ENCODE measurements at regions of chr6 and their contacts with region 1.

Region 1: DNA sequence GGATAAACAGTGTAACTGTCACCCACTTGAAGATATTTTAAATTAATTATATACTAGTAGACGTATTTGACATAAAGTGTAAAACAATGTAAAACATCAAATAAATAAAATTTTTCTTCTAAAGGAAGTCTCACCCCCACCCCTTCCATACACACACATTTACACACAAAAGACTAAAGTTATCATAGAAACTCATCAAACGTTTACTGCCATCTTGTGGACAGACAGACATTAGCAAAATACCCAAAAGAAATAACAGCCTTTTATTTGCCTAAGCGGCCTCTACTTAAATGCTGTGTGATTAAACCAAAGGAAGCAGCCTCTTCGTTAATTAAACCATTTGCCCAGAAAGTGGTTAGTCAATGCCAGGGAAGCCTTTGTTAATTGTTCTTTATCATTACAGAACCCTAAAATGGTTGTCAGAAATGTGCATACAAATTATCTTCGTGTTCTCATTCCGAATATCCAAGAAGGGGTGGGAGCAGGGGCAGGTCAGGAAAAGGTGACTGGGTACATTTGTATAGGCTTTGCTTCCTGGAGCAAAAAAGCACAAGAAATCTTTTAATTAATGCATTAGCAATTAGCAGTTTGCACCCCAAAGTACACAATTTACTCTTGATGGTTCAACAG is 176.2 kb upstream of the SASH1 start:
- DNase-seq: no peak
- ATAC-seq: no peak

Region 2: DNA sequence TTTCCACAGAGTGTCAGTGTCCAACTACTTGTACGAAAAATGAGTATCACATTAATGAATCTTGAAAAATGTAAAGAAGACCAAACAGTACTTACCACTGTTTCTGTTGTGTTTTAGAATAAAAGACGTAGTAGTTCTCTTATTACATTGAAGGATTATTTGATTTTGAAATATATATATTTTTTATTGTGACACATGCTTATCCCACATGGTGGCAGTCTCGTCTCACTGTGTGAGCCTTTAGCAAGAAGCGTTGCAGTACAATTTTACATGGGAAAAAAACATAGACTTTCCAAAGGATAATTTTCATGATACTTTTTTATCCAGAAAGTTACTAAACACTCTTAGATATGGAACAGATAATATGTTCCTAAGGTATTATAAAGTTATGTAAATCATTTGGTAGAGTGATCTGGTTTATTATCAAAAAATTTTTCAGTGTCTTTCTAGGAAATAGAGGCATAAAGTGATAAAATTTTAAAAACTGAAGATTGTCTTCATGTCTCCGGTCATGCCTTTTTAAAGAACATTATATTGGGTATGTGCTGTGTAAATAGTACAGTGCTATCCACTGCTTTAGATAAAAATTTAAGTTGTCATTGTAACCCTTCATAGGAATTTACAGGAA is 775.4 kb before region 1 on chr6:
- intact Hi-C with region 1: loop called (anchors 5 kb)
- DNase-seq: no peak
- ATAC-seq: no peak

Region 3: DNA sequence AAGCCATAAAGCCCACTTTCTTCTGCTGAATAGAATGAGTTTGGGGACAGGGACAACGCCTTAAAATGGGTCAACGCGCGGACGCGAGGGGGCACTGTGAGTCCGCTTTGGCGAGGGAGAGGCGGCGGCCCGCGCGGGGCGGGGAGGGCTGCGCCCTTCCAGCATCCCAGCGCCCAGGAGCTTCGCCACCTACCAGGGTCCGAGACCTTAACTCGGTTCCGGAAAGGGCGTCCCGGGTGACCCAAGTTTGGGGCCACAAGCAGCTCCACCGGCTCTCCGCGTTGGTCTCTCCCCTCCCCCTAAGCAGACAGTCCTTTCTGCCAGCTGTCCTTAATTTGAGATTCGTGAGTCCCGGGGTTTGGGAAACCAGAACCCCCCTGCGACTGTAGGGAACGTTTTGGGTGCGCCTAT is 659.7 kb before region 1 on chr6:
- intact Hi-C with region 1: loop called (anchors 1 kb)
- DNase-seq: peak; percentile 77
- ATAC-seq: peak; percentile 69

Region 4: GRCh38 chr6:147651249-147652063 is 515.0 kb before region 1 on chr6:
- intact Hi-C with region 1: loop called (anchors 5 kb)
- DNase-seq: no peak
- ATAC-seq: peak; percentile 92

Region 5: GRCh38 chr6:148223424-148223842 is 57.0 kb after region 1 on chr6:
- intact Hi-C with region 1: no loop called
- DNase-seq: no peak
- ATAC-seq: no peak

Region 6: GRCh38 chr6:148240461-148240840 is 74.0 kb after region 1 on chr6:
- intact Hi-C with region 1: no loop called
- DNase-seq: peak; percentile 67
- ATAC-seq: peak; percentile 59